ENCODE measurements at regions of chr11 and their contacts with region 1.

Region 1: DNA sequence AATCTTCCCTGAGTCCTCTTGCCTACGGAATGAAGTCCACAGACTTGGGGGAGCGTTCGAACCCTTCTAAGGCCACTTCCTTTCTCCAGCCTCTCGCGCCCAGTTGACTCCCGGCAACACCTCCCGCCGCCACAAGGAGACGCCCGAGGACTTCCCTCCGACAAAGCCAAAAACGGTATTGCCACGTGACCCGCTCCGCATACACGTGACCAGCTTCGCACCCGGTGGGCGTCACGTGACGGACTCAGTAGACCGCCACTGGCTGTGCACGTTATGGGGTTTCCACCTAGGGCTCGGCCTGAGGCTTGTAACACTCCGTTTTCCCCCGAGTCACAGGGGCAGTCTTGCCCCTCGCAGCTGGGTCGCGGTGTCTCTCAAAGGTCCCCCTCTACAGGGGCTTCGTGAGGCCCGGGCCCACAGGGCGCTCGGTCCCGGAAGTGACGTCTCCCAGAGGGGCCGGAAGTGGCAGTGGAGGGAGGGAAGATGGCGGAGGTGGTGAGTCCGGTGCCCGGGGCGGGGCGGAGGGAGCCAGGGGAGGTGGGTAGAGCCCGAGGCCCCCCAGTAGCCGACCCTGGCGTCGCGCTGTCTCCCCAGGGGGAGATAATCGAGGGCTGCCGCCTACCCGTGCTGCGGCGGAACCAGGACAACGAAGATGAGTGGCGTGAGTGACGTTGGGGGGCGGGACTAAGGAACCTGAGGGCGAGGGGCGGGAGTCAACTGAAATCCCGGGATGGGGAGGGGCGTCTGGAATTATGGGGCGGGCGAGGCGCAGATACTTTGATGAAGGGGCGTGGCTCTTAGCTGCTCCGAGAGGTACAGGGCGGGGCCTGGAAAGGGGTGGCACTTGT is at the start of gene KAT5:
- DNase-seq: peak; percentile 91 to 100
- H3K4me3 ChIP-seq: peak within 1 kb of the TSS; percentile 62 to 87 (median 74)
- H3K27ac ChIP-seq: peak within 1 kb of the TSS; percentile 99
- H3K4me1 ChIP-seq: peaks cover 0 to 2% (median 2%) of the 10 kb centered on the region in 4 experiments; a peak in 1 of 7 replicates
- H3K27me3 ChIP-seq: no peaks in the 10 kb centered on the region
- CTCF ChIP-seq: peak; percentile 95 to 96 (median 95)
- EP300 ChIP-seq: 0 out of 3 replicates have a peak, but pooled peaks of 1 of the 2 experiments have one; percentile 60
- POLR2A ChIP-seq: peak; percentile 86 to 88
- RAD21 ChIP-seq: peak; percentile 94 to 96
- total RNA-seq, gene KAT5: 36.4 and 37.4 TPM in 2 replicates

Region 2: DNA sequence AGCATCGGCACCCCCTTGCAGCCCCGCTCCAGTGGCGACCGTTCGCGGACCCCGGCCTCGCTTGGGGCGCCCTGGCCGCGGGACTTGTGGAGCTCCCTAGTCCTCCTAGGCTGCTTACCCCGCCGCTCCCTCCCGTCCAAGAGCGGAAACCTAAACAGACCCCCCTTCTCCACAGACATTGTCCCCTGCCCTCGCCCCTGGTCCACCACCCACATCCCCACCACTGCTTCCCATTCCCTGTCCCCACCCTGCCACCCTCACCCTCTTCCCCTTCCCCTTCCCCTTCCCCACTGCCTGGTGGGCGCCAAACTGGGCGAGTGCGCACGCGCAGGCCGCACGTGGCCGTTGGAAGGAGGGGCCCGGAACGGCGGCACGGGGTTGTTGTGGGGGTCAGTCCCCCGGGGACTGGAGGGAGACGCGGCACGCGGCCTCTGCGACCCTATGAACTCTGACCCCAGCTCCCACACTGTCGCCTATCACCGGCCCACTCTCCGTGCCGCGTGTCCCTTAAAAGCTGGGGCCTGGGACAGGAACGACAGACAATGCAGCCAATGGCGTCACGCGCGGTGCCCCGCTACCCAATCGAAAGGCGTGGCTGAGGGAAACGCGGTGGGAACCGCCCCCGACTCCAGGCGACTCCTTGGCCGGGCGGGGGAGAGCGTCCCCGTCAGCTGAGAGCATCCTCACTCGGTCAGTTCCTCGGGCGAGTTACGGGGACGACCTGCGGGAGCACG is 121.5 kb after region 1 on chr11 and contains the start of gene SNX32:
- CTCF ChIA-PET with region 1: interaction called, 6 read pairs
- POLR2A ChIA-PET with region 1: interaction called, 18 read pairs
- DNase-seq: peak in 1 of 2 experiments; percentile 97
- H3K4me3 ChIP-seq: peak within 1 kb of the TSS; percentile 68 to 72 (median 70)
- H3K27ac ChIP-seq: peak within 1 kb of the TSS; percentile 70; the same call in 1 of the 2 replicates
- H3K4me1 ChIP-seq: peaks cover 0 to 8% (median 6%) of the 10 kb centered on the region in 4 experiments; a peak in 6 of 7 replicates
- H3K27me3 ChIP-seq: peaks cover 0 to 9% (median 6%) of the 10 kb centered on the region in 4 experiments; a peak in 4 of 7 replicates
- CTCF ChIP-seq: no peak
- EP300 ChIP-seq: no peak
- POLR2A ChIP-seq: peak in 1 of 2 experiments; percentile 41; a peak in 1 of 3 replicates
- RAD21 ChIP-seq: no peak
- total RNA-seq, gene SNX32: 1.1 and 2.2 TPM in 2 replicates

Measured in H1 (cell line).